ENCODE measurements at regions of chr21 and their contacts with region 1.

Region 1: DNA sequence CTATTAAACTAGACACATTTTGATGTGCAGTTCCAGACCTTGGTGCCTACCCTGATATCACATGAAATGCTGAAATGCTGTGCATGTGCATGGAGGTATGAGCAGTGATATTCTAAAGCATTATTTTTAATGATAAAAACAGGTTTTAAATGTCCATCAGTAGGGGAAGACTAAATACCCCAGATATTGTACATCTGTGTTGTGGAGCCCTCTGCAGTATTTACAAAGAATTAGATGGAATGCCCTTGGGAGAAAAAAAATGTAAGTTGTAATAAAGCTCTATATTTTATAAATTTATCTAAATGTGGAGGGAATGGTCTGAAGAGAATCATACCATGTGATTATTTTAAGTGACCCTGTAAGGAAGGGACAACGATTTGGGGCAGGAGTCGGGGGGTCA is 39.1 kb upstream of the IGSF5 start:
- DNase-seq: no peak
- H3K4me3 ChIP-seq: no peak overlapping the region
- CTCF ChIP-seq: peak; percentile 11

Region 2: DNA sequence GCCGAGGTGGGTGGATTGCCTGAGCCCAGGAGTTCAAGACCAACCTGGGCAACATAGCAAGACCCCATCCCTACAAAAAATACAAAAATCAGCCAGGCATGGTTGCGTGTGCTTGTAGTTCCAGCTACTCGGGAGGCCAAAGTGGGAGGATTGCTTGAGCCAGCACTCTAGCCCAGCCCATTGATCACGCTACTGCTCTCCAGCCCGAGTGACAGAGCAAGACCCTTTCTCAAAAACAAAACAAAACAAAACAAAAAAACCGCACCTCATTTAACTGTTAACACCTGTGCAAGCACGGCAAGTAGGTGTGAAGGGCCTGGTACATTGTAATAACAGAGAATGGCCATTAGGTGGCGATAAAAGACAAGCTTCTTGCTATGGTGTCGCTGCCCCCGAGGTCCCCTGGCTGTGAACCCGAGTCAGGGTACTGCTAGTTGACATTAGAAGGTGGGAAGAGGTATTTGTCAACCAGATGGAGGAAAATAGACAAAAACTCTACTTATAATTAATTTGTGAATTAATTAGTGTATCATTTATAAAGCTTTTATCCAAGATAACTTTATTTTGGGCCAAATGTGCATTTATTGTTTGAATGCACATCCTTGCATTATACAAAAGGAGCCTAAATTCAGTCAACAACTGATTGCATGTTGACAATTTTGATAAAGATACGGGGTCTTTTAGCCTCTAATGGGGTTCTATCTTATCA is 187.6 kb before region 1 on chr21:
- in situ Hi-C with region 1: loop called (anchors 10 kb)
- DNase-seq: peak; percentile 16
- H3K4me3 ChIP-seq: no peak overlapping the region
- CTCF ChIP-seq: peak; percentile 84

Region 3: DNA sequence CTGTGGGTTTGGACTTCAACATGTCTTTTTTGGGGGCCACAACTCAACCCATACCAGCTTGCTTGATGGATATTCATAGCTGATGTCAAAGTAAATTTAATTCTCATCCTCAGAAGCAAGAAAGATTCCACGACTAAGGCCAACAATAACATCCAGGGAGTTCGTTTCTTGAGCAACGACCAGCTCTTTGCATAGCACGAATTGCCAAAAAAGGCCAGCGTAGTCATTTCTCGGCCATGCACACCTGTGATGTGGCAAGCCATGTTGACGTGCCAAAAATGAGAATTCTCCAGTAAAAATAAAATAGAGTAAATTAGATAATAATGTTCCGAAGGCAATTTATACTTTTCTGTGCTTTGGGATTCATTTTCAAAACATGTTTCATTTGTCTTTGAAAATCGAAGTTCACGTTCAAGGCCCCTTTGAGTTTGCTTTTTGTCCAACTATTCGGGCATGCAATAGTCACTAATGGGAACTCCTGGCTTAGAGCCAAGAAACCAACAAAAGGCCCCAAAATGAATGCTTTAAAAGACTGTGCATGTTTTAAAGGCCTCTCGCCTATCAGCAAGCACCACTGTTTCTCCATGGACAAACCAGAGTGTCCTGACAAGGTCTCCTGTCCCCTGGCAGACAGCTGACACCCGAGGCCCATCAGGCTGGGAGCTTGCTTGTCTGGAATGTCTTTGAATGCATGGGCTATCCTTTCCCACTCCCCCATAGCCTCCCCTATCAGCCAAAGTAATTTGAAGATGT is 24.7 kb after region 1 on chr21:
- in situ Hi-C with region 1: no loop called
- DNase-seq: peak; percentile 47
- H3K4me3 ChIP-seq: no peak overlapping the region
- CTCF ChIP-seq: no peak